Colonic mucosa (tissue), 4 donors: ENCODE measurements at regions of chr16 and their contacts with region 1.

Region 1: DNA sequence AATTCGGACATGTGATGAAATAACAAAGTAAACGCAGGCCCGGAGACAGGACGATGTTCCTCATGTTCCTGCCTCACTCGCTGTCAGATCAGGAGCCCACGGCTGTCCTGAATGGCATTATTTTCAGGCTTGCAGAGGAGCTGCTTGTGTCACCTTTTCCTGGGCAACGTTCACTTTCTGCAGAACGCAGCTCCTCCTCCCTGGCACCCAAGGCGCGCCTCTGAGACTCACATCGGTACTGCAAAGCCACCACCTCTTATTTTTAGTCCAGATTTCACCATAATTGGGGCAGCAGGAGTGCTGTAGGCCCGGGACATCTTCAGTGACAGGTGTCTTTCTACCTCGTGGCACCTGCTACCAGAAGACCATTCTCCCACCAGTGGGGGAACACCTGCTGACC is 8.0 kb upstream of the C16orf96 start:
- DNase-seq: no peak
- H3K4me3 ChIP-seq: no peak overlapping the region
- H3K27ac ChIP-seq: no peak overlapping the region
- H3K4me1 ChIP-seq: no peaks in the 10 kb centered on the region
- H3K27me3 ChIP-seq: no peaks in the 10 kb centered on the region
- CTCF ChIP-seq: no peak

Region 2: GRCh38 chr16:4307215-4308037 is 240.7 kb before region 1 on chr16:
- intact Hi-C with region 1: no loop called
- DNase-seq: peak; percentile 91
- H3K4me3 ChIP-seq: peak overlapping the region; percentile 44
- H3K27ac ChIP-seq: peak overlapping the region; percentile 73
- H3K4me1 ChIP-seq: no peaks in the 10 kb centered on the region
- H3K27me3 ChIP-seq: no peaks in the 10 kb centered on the region
- CTCF ChIP-seq: no peak

Region 3: DNA sequence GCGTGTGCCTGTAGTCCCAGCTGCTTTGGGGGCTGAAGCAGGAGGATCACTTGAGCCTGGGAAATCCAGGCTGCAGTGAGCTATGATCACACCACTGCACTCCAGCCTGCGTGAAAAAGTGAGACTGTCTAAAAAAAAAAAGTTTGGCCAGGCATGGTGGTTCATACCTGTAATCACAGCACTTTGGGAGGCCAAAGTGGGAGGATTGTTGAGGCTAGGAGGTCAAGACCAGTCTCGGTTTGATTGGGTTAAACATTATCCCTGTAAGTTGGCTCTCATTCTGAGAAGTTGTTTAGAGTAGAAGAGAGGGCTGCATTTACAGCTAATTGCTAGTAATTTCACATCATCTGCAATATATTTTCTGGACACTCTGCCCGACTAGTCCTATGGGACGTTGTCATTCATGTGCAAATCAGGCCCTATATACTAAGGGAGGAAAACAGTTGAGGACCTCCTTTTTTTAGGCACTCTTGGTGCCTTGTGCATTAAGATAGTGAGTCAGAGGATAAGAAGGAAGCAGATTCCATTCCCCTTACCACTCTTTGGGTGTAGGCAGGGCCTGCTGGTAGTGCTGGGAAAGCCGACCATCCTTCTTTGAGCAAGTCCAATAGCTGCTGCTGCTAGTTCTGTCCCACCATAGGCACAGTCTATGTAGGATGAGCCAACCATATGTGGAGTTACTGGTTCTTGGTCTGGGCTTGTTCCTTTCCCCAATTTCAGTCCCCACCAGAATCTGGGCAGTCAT is 53.2 kb before region 1 on chr16:
- intact Hi-C with region 1: no loop called
- DNase-seq: no peak
- H3K4me3 ChIP-seq: no peak overlapping the region
- H3K27ac ChIP-seq: no peak overlapping the region
- H3K4me1 ChIP-seq: no peaks in the 10 kb centered on the region
- H3K27me3 ChIP-seq: no peaks in the 10 kb centered on the region
- CTCF ChIP-seq: no peak

Region 4: GRCh38 chr16:4506450-4506849 is 41.7 kb before region 1 on chr16:
- intact Hi-C with region 1: loop called (anchors 2 kb)
- DNase-seq: peak; percentile 66
- H3K4me3 ChIP-seq: no peak overlapping the region
- H3K27ac ChIP-seq: no peak overlapping the region
- H3K4me1 ChIP-seq: peaks cover 5% of the 10 kb centered on the region
- H3K27me3 ChIP-seq: no peaks in the 10 kb centered on the region
- CTCF ChIP-seq: peak; percentile 73